ENCODE measurements at regions of chr1 and their contacts with region 1.

Region 1: GRCh38 chr1:203267347-203267846 is 37.9 kb upstream of the BTG2 start:
- DNase-seq: peak; percentile 86
- ATAC-seq: peak; percentile 58
- H3K4me3 Mint-ChIP-seq: peak overlapping the region; percentile 76
- H3K27ac Mint-ChIP-seq: no peak overlapping the region; the same call in 1 of the 2 replicates
- H3K4me1 Mint-ChIP-seq: peaks cover 11% of the 10 kb centered on the region
- H3K27me3 Mint-ChIP-seq: peaks cover 10% of the 10 kb centered on the region
- CTCF ChIP-seq: peak; percentile 85

Region 2: GRCh38 chr1:203069030-203069747 is 198.2 kb before region 1 on chr1:
- CTCF ChIA-PET with region 1: interaction called, 17 read pairs
- POLR2A ChIA-PET with region 1: no interaction called
- DNase-seq: no peak
- ATAC-seq: no peak
- H3K4me3 Mint-ChIP-seq: no peak overlapping the region
- H3K27ac Mint-ChIP-seq: no peak overlapping the region
- H3K4me1 Mint-ChIP-seq: peaks cover 9% of the 10 kb centered on the region
- H3K27me3 Mint-ChIP-seq: peaks cover 2% of the 10 kb centered on the region; the same call in 1 of the 2 replicates
- CTCF ChIP-seq: no peak

Region 3: DNA sequence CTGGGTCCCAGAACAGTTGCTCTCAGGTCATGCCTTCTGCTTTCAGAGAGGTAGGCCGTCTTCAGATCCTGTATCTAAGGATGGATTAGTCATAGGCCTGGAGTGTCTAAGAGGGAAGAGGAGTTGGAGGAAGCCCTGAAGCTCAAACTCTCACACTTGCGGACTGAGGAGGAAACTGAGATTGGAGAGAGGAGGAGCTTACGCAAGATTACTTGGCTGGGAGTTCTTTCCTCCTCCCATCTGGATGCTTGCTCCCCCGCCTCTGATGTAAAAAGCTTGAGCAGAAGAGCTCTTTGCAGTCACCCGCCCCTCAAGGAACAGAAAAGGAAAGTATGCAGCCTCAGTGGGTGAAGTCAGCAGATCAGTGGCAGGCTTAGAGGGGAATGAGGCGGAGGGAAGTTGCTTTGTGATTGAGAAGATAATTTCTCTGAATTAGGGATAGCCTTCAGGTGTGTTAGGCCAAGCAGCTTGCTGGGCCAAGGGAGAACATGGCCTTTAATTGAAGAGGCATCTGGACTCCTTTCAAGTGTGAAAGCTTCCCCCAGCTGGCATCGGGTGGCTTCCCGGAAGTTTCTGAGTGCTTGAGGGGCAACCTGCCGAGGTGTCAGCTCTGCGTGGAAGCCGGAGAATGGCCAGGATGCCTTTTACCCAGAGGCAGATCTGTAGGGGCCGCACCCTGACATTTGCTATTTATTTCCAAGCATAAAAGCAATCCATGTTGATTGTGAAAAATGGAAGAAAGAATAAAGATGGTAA is 133.2 kb before region 1 on chr1:
- CTCF ChIA-PET with region 1: interaction called, 93 read pairs
- POLR2A ChIA-PET with region 1: no interaction called
- DNase-seq: no peak
- ATAC-seq: peak; percentile 40
- H3K4me3 Mint-ChIP-seq: no peak overlapping the region
- H3K27ac Mint-ChIP-seq: no peak overlapping the region
- H3K4me1 Mint-ChIP-seq: peaks cover 11% of the 10 kb centered on the region
- H3K27me3 Mint-ChIP-seq: peaks cover 7% of the 10 kb centered on the region
- CTCF ChIP-seq: no peak

Region 4: DNA sequence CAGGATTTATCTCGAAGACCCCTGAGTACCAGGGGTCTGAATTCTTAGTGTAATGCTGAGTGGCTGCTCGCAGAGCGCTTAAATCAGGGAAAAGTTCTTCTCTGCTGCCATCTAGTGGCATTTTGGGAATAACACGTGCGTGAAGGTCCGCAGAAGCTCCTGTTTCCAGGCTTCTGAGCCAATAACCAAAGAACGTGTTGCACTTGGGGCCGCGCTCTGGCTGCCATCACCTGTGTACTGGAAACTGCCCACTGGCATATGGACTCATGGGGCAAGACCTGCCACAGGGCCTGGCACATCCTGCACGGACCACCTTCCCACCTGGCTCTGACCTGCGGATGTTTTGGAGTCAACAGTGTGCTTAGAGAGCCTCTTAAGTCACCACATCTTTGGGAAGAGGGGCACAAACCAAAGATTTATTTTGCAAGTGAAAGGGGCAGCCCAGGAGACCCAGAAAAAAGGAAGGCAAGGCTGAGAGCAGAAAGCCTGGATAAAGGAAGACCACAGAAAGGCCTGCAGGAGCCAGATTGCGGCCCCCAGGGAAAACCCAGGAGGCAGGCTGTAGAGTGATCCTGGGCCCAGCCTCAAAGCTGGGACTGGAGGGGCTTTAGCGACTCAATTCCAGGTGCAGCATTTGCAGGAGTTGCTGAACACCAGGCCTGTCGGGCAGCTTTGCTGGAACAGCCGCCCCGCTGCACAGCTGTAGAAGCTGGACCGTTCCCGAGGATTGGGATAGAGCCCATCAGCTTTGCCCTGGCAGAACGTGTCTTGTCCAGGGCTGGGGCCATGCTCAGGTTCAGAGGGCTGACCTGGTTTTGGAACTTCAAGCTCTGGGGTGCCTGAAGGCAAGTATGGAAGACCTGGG is 50.9 kb before region 1 on chr1:
- CTCF ChIA-PET with region 1: interaction called, 77 read pairs
- POLR2A ChIA-PET with region 1: no interaction called
- DNase-seq: peak; percentile 75
- ATAC-seq: peak; percentile 75
- H3K4me3 Mint-ChIP-seq: peak overlapping the region; percentile 29
- H3K27ac Mint-ChIP-seq: peak overlapping the region; percentile 34
- H3K4me1 Mint-ChIP-seq: peaks cover 17% of the 10 kb centered on the region
- H3K27me3 Mint-ChIP-seq: peaks cover 6% of the 10 kb centered on the region
- CTCF ChIP-seq: peak; percentile 75

Region 5: DNA sequence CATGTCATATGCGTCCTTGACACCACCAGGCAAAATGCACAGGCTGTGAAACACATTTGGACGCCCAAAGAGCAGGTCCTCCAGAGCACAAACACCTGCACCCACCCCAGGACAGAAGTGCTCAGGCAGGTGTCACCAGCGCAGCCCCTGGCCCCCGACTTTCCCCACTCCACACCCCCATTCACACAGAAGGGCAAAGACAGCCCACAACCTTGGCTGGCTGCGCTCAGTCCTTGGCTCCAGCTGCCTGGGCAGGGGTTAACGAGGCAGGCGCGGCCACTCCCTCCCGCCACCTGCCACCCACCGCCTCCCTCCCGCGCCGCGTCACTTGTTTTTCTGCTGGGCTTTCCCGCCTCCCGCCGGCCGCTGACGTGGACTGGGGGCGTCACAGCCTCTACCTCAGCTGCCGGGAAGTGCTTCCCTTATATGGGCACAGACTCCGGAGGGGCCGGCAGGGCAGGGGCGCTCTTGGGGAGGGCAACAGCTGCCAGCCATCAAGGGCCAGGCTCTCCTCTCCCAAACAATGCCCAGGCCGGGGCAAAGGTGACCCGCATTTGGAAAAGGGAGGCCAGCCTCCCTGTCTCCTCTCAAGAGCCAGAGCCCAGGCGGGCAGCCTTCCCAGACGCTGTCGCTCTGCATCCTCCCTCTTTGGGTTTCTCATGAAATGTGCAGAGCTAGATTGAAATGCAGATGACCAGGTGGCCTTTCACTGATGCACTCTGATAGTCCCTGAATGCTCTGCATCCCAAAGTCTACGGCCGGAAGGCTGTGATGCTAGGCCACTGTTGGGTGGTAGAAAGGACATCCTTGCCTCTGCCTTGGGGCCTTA is 23.1 kb after region 1 on chr1:
- CTCF ChIA-PET with region 1: interaction called, 78 read pairs
- POLR2A ChIA-PET with region 1: interaction called, 5 read pairs
- DNase-seq: peak; percentile 93
- ATAC-seq: peak; percentile 83
- H3K4me3 Mint-ChIP-seq: peak overlapping the region; percentile 63
- H3K27ac Mint-ChIP-seq: peak overlapping the region; percentile 97
- H3K4me1 Mint-ChIP-seq: peaks cover 55% of the 10 kb centered on the region
- H3K27me3 Mint-ChIP-seq: peaks cover 64% of the 10 kb centered on the region
- CTCF ChIP-seq: no peak

Region 6: DNA sequence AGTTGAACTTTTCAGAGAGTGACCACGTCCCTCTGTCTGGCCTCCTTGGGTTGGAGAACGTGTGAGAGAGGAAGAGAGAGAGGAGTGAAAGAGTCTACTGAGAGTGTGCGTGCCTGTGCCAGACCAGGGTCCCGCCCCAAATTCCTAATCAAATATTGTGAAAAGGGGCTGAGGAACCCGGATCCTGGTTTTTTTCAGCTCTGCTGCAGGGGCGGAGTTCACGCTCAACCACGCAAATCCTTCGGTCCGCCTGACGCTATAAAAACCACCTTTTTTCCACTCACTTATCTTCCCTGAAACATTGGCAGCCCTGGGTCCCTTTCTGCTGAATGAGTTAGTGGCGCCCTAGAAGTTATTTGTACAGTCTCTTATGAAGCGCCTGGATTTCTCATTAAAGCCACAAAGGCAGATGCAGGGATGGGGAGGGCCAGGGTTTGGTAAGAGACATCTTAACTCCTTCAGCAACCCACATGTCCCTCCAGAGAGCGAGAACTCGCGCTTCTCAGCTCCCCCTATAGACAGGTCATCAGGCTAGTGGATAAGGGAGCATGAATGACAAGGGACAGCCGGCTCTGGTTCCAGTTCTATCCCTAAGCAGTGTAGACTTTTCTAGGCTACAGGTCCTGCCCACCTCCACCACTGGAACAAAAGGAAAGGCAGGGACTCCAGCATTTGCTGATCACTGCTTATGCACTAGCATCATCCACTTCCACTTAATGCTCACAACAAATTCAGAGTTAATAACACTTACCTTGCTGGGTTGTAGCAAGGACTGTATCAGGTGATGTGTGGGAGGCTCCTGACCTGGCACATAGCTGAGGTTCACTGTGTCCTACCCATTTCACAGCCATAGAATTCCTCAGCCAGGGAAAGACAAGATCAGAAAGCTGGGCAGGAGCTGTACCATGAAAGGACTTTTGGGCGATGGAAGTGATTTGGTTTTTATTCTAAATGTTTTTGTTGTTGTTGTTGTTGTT is 83.9 kb after region 1 on chr1 and contains the start of gene FMOD:
- CTCF ChIA-PET with region 1: interaction called, 121 read pairs
- POLR2A ChIA-PET with region 1: no interaction called
- DNase-seq: peak; percentile 49
- ATAC-seq: peak; percentile 97
- H3K4me3 Mint-ChIP-seq: no peak within 1 kb of the TSS
- H3K27ac Mint-ChIP-seq: no peak within 1 kb of the TSS; the same call in 1 of the 2 replicates
- H3K4me1 Mint-ChIP-seq: peaks cover 11% of the 10 kb centered on the region
- H3K27me3 Mint-ChIP-seq: peaks cover 13% of the 10 kb centered on the region
- CTCF ChIP-seq: no peak
- total RNA-seq, gene FMOD: 0.05 to 0.79 TPM (median 0.14 TPM) in 3 replicates

Region 7: GRCh38 chr1:203625628-203626019 is 358.2 kb after region 1 on chr1:
- CTCF ChIA-PET with region 1: interaction called, 11 read pairs
- POLR2A ChIA-PET with region 1: no interaction called
- DNase-seq: no peak
- ATAC-seq: no peak
- H3K4me3 Mint-ChIP-seq: peak overlapping the region; percentile 92
- H3K27ac Mint-ChIP-seq: peak overlapping the region; percentile 20; the same call in 1 of the 2 replicates
- H3K4me1 Mint-ChIP-seq: peaks cover 57% of the 10 kb centered on the region
- H3K27me3 Mint-ChIP-seq: peaks cover 28% of the 10 kb centered on the region
- CTCF ChIP-seq: no peak

Measured in WTC11 (cell line).